IMR-90 (cell line): ENCODE measurements at regions of chr20 and their contacts with region 1.

Region 1: GRCh38 chr20:13325033-13325432 is 104.0 kb downstream of the ISM1 start:
- DNase-seq: peak; percentile 16
- ATAC-seq: peak; percentile 80
- H3K4me3 ChIP-seq: no peak overlapping the region
- H3K27ac ChIP-seq: no peak overlapping the region
- H3K4me1 ChIP-seq: no peaks in the 10 kb centered on the region
- H3K27me3 ChIP-seq: peaks cover 10% of the 10 kb centered on the region
- CTCF ChIP-seq: peak; percentile 49
- POLR2A ChIP-seq: no peak
- RAD21 ChIP-seq: peak; percentile 58

Region 2: DNA sequence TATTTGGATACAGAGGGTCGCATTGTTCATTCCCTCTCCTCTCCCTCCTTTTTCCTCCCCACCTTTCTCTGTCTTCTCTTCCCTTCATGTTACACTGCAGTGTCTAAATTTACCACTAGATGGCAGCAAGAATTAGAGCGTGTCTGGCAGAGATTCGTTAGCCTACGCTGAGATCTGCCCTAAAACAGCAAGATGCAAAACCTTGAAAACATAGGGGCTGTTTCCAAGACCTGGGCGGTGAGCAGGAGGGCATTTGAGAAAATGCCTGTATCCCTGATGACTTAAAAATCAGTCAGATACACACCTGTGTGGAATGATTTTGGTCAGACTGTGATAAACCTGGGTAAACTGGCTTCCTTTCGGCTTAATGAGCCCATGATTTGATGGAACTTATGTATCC is 205.4 kb before region 1 on chr20:
- CTCF ChIA-PET with region 1: no interaction called
- POLR2A ChIA-PET with region 1: no interaction called
- dilution Hi-C with region 1: no loop called
- in situ Hi-C with region 1: no loop called
- intact Hi-C with region 1: no loop called
- DNase-seq: peak; percentile 57
- ATAC-seq: peak; percentile 96
- H3K4me3 ChIP-seq: no peak overlapping the region
- H3K27ac ChIP-seq: no peak overlapping the region
- H3K4me1 ChIP-seq: no peaks in the 10 kb centered on the region
- H3K27me3 ChIP-seq: no peaks in the 10 kb centered on the region; the same call in 1 of the 2 replicates
- CTCF ChIP-seq: peak; percentile 87
- POLR2A ChIP-seq: no peak
- RAD21 ChIP-seq: peak; percentile 79

Region 3: DNA sequence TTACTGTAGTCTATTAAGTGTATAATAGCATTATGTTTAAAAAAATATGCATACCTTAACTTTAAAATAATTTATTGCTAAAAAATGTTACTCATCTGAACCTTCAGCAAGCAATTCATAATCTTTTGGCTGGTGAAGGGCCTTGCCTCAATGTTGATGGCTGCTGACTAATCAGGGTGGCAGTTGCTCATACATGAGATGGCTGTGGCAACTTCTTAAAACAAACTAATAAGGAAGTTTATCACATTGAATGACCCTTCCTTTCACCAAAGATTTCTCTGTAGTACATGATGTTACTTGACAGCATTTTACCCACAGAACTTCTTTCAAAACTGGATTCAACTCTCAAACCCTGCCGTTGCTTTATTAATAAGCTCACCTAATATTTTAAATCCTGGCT is 229.7 kb after region 1 on chr20:
- CTCF ChIA-PET with region 1: interaction called, 28 read pairs
- POLR2A ChIA-PET with region 1: no interaction called
- dilution Hi-C with region 1: no loop called
- in situ Hi-C with region 1: loop called (anchors 10 kb)
- intact Hi-C with region 1: no loop called
- DNase-seq: peak; percentile 44
- ATAC-seq: peak; percentile 61
- H3K4me3 ChIP-seq: no peak overlapping the region
- H3K27ac ChIP-seq: no peak overlapping the region
- H3K4me1 ChIP-seq: no peaks in the 10 kb centered on the region
- H3K27me3 ChIP-seq: no peaks in the 10 kb centered on the region
- CTCF ChIP-seq: no peak
- POLR2A ChIP-seq: no peak
- RAD21 ChIP-seq: no peak

Region 4: GRCh38 chr20:13765299-13765698 is 440.3 kb after region 1 on chr20:
- CTCF ChIA-PET with region 1: interaction called, 8 read pairs
- POLR2A ChIA-PET with region 1: no interaction called
- dilution Hi-C with region 1: no loop called
- in situ Hi-C with region 1: loop called (anchors 10 kb)
- intact Hi-C with region 1: no loop called
- DNase-seq: peak; percentile 13
- ATAC-seq: no peak
- H3K4me3 ChIP-seq: no peak overlapping the region
- H3K27ac ChIP-seq: no peak overlapping the region
- H3K4me1 ChIP-seq: no peaks in the 10 kb centered on the region
- H3K27me3 ChIP-seq: no peaks in the 10 kb centered on the region
- CTCF ChIP-seq: no peak
- POLR2A ChIP-seq: no peak
- RAD21 ChIP-seq: no peak

Region 5: DNA sequence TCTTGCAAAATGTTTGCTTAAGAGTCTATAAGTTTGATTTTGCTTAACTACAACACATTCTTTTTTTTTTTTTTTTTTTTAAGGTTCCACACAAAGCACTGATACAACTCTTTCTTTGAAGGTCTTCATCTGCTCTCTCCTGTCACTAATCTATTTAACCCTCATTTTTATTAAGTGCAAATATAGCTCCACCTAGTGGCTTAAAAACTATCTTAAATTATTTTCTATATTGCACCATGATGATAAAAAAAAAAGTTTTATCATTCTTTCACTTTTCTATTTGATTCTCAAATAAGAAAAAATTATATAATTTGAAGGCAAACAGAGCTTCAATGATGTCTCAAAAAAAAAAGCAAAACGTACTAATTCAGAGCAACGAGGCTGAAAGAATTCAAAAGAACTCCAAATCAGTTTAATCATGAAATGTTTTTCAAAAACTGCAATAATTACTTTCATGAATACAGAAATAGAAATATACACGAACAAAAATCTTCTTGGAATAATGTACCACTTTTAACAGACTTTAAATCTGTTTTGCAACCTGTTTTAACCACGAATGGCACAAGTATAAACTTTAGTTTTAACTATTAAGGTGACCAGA is 446.9 kb after region 1 on chr20:
- CTCF ChIA-PET with region 1: interaction called, 7 read pairs
- POLR2A ChIA-PET with region 1: no interaction called
- dilution Hi-C with region 1: no loop called
- in situ Hi-C with region 1: loop called (anchors 10 kb)
- intact Hi-C with region 1: loop called (anchors 1 kb)
- DNase-seq: peak; percentile 27
- ATAC-seq: peak; percentile 48; the same call in 1 of the 2 replicates
- H3K4me3 ChIP-seq: no peak overlapping the region
- H3K27ac ChIP-seq: no peak overlapping the region
- H3K4me1 ChIP-seq: no peaks in the 10 kb centered on the region
- H3K27me3 ChIP-seq: no peaks in the 10 kb centered on the region
- CTCF ChIP-seq: peak; percentile 51
- POLR2A ChIP-seq: no peak
- RAD21 ChIP-seq: peak; percentile 26

Region 6: GRCh38 chr20:13784893-13785715 is 460.1 kb after region 1 on chr20 and contains the starts of genes ESF1 and NDUFAF5:
- CTCF ChIA-PET with region 1: interaction called, 4 read pairs
- POLR2A ChIA-PET with region 1: no interaction called
- dilution Hi-C with region 1: no loop called
- in situ Hi-C with region 1: no loop called
- intact Hi-C with region 1: loop called (anchors 5 kb)
- DNase-seq: peak; percentile 97
- ATAC-seq: peak; percentile 97
- H3K4me3 ChIP-seq: peak within 1 kb of the TSS; percentile 68
- H3K27ac ChIP-seq: peak within 1 kb of the TSS; percentile 69
- H3K4me1 ChIP-seq: peaks cover 3% of the 10 kb centered on the region
- H3K27me3 ChIP-seq: no peaks in the 10 kb centered on the region
- CTCF ChIP-seq: no peak
- POLR2A ChIP-seq: peak; percentile 36; the same call in 1 of the 2 replicates
- RAD21 ChIP-seq: no peak
- total RNA-seq, gene ESF1: 2.7 and 5.3 TPM in 2 replicates
- total RNA-seq, gene NDUFAF5: 6.8 and 22.8 TPM in 2 replicates